CD4-positive, alpha-beta memory T cell (primary cell): ENCODE measurements at regions of chr11 and their contacts with region 1.

Region 1: DNA sequence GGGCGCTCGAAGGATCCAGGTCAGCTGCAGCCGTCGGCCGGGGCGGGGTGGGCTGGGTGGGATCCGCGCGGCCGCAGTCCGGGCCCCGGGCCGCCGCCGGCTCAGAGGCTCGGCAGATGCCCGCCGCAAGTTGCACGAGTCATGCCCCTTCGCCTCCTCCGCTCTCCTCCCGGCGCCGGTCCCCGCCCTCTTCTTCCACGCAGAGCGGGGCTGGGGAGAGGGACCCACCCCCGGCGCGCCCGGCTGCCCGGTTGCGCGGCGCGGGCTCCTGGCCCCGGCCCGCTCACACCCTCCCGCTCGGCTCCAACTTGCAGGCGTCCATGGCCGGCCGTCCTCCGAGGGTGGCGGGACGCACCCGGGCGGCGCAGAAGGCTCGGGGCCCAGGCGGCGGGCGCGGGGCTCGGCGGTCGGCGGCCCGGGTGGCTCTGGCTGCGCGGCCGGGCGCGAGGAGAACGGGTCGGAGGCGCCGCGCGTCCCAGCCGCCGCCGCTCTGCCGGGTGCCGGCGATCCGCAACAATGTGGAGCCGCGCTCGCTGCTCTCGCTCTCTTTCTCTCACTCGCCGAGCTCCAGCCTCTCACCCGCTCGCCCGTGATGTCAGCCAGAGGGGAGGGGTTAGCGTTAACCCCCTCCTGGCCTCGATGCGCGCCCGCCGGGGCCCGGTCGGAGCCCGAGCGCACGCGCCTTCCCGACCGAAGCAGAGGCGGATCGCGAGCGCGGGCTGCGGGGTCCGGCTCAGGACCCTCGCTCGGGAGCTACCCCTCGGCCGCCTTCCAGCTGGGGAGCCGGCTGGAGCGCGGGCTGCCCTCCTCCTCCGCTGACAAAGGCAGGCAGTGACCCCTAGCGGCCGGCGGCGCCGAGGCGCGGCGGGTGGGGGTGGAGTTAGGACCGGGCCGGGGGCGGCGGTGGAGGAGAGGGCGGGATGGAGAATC is at the start of gene NECTIN1:
- DNase-seq: peak; percentile 84 to 88 (median 86)
- H3K4me3 ChIP-seq: peak within 1 kb of the TSS; percentile 47 to 69
- H3K4me3 Mint-ChIP-seq: peak within 1 kb of the TSS; percentile 93 to 98 (median 95)
- H3K27ac ChIP-seq: peak within 1 kb of the TSS; percentile 37
- H3K27ac Mint-ChIP-seq: peak within 1 kb of the TSS; percentile 80 to 95 (median 89)
- H3K4me1 ChIP-seq: peaks cover 20% of the 10 kb centered on the region
- H3K4me1 Mint-ChIP-seq: peaks cover 6 to 22% (median 14%) of the 10 kb centered on the region in 4 donors
- H3K27me3 ChIP-seq: peaks cover 10% of the 10 kb centered on the region
- H3K27me3 Mint-ChIP-seq: peaks cover 10 to 13% of the 10 kb centered on the region in 2 donors
- total RNA-seq, gene NECTIN1: 3.5 to 3.8 TPM

Region 2: GRCh38 chr11:119624102-119624615 is 104.8 kb before region 1 on chr11:
- CTCF ChIA-PET with region 1: interaction called, 13 read pairs
- POLR2A ChIA-PET with region 1: no interaction called
- intact Hi-C with region 1: no loop called
- DNase-seq: no peak
- H3K4me3 ChIP-seq: no peak overlapping the region
- H3K4me3 Mint-ChIP-seq: no peak overlapping the region
- H3K27ac ChIP-seq: no peak overlapping the region
- H3K27ac Mint-ChIP-seq: no peak overlapping the region
- H3K4me1 ChIP-seq: no peaks in the 10 kb centered on the region
- H3K4me1 Mint-ChIP-seq: no peaks in the 10 kb centered on the region
- H3K27me3 ChIP-seq: no peaks in the 10 kb centered on the region
- H3K27me3 Mint-ChIP-seq: peaks cover 7 to 22% of the 10 kb centered on the region in 2 donors

Region 3: DNA sequence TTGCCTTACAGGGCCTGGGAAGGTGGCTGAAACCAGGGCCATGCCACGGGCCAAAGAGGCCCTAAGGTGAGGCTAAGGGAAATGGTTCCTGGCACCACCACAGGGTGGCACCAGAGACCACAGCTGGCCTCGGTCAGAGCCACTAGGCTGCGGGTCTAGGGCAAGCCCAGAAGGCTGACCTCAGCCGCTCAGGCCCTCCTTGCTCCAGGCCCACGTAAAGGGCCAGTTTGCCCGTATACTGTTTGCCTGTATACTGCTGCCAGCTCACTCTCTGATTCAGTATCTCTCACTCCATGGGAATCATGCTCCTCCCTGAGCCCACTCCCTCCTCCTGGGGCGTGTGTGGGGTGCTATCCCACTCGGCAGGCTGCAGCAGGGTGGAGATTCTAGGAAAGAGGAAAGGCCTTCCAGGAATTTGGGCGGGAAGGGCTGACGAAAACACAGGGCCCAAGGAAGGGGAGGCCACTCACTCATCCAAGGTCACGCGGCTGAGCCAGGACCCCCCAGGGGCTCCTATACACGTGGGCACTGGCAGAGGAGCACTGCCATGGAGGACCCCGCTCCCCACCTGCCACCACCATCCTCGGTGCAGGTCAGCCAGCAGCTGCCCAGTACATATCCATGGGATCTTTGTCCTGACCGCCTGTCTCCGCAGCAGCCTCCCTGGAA is 62.3 kb before region 1 on chr11:
- CTCF ChIA-PET with region 1: interaction called, 30 read pairs
- POLR2A ChIA-PET with region 1: no interaction called
- intact Hi-C with region 1: loop called (anchors 1 kb)
- DNase-seq: peak in 4 of 5 donors; percentile 40 to 52 (median 43)
- H3K4me3 ChIP-seq: no peak overlapping the region
- H3K4me3 Mint-ChIP-seq: no peak overlapping the region
- H3K27ac ChIP-seq: no peak overlapping the region
- H3K27ac Mint-ChIP-seq: no peak overlapping the region
- H3K4me1 ChIP-seq: no peaks in the 10 kb centered on the region
- H3K4me1 Mint-ChIP-seq: no peaks in the 10 kb centered on the region
- H3K27me3 ChIP-seq: no peaks in the 10 kb centered on the region
- H3K27me3 Mint-ChIP-seq: no peaks in the 10 kb centered on the region

Region 4: GRCh38 chr11:119684361-119685110 is 44.4 kb before region 1 on chr11:
- CTCF ChIA-PET with region 1: interaction called, 5 read pairs
- POLR2A ChIA-PET with region 1: no interaction called
- intact Hi-C with region 1: loop called (anchors 5 kb)
- DNase-seq: no peak
- H3K4me3 ChIP-seq: no peak overlapping the region
- H3K4me3 Mint-ChIP-seq: peak overlapping the region in 1 of 8 donors; percentile 38
- H3K27ac ChIP-seq: no peak overlapping the region
- H3K27ac Mint-ChIP-seq: no peak overlapping the region
- H3K4me1 ChIP-seq: peaks cover 9% of the 10 kb centered on the region
- H3K4me1 Mint-ChIP-seq: peaks cover 0 to 22% (median 9%) of the 10 kb centered on the region in 4 donors
- H3K27me3 ChIP-seq: no peaks in the 10 kb centered on the region
- H3K27me3 Mint-ChIP-seq: no peaks in the 10 kb centered on the region

Region 5: DNA sequence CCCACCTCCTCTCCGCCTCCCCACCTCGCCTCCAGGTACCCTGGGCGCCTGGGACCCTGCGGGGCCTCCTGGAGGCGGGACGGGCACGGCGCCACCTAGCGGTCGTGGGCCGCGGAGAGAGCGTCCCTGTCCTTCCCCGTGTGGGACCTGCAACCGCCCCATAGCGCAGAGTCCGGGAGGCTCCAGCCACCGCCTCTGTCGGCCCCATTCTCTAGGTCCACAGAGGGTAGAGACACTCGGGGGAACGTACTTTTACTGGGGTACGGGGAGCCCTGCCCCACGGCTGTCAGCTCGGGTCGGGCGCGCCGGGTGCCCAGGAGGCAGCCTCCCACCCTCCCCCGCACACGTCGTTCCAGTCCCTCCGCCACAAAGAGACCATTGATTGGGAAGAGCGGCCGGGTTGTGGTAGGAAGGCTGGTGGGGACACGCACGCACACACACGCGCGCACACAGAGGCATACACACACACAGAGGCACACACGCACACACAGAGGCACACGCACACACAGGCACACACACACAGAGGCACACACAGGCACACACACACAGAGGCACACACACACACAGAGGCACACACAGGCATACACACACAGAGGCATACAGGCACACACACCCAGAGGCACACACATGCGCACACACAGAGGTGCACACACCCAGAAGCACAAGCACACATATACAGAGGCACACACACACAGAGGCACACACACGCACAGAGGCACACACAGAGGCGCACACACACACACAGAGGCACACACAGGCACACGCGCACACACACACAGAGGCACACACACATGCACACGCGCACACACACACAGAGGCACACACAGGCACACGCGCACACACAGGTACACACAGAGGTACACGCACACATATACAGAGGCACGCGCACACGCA is 12.7 kb after region 1 on chr11:
- CTCF ChIA-PET with region 1: interaction called, 25 read pairs
- POLR2A ChIA-PET with region 1: no interaction called
- intact Hi-C with region 1: loop called (anchors 1 kb)
- DNase-seq: peak in 4 of 5 donors; percentile 37 to 49 (median 44)
- H3K4me3 ChIP-seq: no peak overlapping the region
- H3K4me3 Mint-ChIP-seq: peak overlapping the region in 7 of 8 donors; percentile 15 to 78 (median 44)
- H3K27ac ChIP-seq: no peak overlapping the region
- H3K27ac Mint-ChIP-seq: no peak overlapping the region
- H3K4me1 ChIP-seq: peaks cover 7% of the 10 kb centered on the region
- H3K4me1 Mint-ChIP-seq: peaks cover 8 to 22% (median 10%) of the 10 kb centered on the region in 4 donors
- H3K27me3 ChIP-seq: peaks cover 17% of the 10 kb centered on the region
- H3K27me3 Mint-ChIP-seq: peaks cover 27 to 34% of the 10 kb centered on the region in 2 donors

Region 6: DNA sequence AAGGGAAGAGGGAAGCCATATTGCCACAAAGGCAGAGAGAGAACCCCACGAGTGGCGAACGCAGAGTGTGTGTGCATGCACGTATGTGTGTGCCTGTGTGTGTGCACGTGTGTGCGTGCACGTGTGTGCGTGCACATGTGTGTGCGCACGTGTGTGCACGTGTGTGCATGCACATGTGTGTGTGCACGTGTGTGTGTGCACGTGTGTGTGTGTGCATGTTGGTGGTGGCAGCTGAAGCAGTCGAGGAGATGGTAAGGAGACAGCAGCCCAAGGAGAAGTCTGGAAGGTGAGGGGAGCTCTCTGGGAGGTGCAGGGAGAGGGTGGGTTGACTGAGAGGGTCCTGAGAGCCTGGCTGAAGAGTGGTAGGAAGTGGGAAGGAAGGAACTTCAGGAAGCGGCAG is 94.2 kb after region 1 on chr11:
- CTCF ChIA-PET with region 1: no interaction called
- POLR2A ChIA-PET with region 1: no interaction called
- intact Hi-C with region 1: no loop called
- DNase-seq: no peak
- H3K4me3 ChIP-seq: no peak overlapping the region
- H3K4me3 Mint-ChIP-seq: no peak overlapping the region
- H3K27ac ChIP-seq: no peak overlapping the region
- H3K27ac Mint-ChIP-seq: peak overlapping the region in 1 of 7 donors; percentile 73
- H3K4me1 ChIP-seq: no peaks in the 10 kb centered on the region
- H3K4me1 Mint-ChIP-seq: no peaks in the 10 kb centered on the region
- H3K27me3 ChIP-seq: no peaks in the 10 kb centered on the region
- H3K27me3 Mint-ChIP-seq: peaks cover 15 to 26% of the 10 kb centered on the region in 2 donors